Posterior vena cava (tissue), 2 donors: ENCODE measurements at regions of chr11 and their contacts with region 1.

Region 1: DNA sequence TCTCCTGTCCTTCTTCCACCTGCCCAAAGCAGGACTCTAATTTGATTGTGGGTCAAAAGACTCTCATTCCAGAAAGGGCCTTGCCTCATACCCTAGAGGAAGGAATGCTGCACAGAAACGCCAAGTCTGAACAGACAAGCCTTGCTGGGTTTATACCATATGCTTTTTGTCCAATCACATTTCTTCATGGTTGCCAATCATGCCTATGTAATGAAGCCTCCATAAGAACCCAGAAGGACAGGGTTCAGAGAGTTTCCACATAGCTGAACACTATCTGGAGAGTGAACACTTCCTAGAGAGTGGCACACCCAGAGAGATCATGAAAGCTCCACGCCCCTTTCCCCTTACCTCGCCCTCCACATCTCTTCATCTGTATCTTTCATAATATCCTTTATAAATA is 4.8 kb upstream of the SAA2 start:
- DNase-seq: no peak

Region 2: GRCh38 chr11:17263769-17264168 is 989.5 kb before region 1 on chr11:
- intact Hi-C with region 1: loop called in 1 of 2 experiments (anchors 5 kb)
- DNase-seq: no peak

Region 3: DNA sequence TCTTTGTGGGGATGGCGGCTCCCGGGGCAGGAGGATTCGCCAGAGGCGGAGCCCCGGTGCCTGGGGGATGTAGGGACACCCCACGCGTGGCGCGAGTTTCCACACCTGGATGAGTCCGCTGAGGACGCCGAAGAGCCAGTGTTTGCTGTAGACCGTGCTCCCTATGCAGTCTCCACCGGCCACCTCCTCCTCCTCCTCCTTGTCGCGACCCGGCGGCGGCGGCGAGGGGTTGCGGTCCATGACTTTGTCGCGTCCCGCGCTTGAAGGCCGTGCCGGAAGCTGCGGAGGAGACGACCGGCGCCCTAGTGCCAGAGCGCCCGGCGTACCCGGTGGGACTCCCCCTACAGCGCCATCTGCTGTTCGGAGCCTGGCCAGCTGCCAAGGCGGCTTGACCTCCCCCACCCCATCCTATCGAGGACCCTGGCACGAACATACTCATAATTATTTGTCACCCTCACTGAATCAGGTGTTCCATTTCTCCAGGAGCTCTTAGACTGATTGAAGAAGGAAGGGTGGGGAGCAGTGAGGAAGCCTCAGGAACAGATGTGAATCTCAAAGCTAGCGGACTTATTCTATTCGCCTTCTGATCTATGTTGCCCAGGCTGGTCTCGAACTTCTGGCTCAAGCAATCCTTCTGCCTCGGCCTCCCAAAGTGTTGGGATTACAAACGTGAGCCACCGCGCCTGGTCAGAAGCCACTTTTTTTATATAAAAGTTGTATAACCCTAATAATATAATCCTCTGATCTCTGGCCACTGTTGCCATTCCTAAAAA is 147.2 kb before region 1 on chr11 and contains the start of gene SAAL1:
- intact Hi-C with region 1: no loop called
- DNase-seq: peak; percentile 95
- total RNA-seq, gene SAAL1: 9.9 to 10.2 TPM

Region 4: GRCh38 chr11:18361154-18361553 is 107.9 kb after region 1 on chr11:
- intact Hi-C with region 1: no loop called
- DNase-seq: no peak

Region 5: GRCh38 chr11:18427240-18427639 is 174.0 kb after region 1 on chr11:
- intact Hi-C with region 1: no loop called
- DNase-seq: no peak